Right ventricle myocardium inferior (tissue), 1 donor: ENCODE measurements at regions of chr10 and their contacts with region 1.

Region 1: DNA sequence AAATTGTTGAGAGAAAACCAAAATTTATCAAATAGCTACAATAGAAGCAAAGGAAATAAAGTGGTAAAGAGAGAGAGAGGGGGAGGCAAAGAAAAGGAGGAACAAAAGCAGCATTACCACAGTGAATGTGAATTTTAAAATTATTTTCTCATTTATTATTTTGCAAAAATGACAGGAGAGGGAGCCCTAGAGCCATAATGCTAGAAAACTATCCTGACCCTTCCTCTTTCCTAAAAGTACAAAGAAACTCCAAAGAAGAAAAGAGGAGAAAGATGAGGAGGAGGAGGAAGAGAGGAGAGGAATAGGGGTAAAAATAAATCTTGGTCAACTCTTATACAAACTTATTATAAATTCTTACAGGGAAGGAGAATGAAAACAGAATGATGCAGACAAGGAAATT is 921.5 kb downstream of the NRG3 start:
- DNase-seq: no peak
- ATAC-seq: no peak

Region 2: GRCh38 chr10:82551506-82551905 is 245.0 kb before region 1 on chr10:
- intact Hi-C with region 1: no loop called
- DNase-seq: no peak
- ATAC-seq: no peak

Region 3: DNA sequence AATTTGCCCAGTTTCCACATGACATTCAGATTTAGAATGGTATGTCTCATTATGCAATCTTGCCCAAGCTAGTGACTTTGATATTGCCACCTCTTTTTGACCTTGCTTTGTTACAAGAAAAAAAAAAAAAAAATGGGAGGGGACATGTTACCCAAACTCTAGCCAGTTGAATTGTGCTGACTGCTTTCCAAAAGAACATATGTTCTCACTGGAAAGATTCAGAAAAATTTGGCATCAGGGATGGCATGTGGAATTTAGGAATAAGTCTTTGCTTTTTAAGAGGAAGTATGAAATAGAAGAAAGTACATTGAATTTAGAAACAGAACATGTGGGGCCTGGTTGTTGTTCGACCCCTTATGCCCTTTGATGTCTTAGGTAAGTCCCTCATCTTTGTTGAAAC is 74.7 kb before region 1 on chr10:
- intact Hi-C with region 1: no loop called
- DNase-seq: no peak
- ATAC-seq: no peak

Region 4: GRCh38 chr10:82737549-82737948 is 59.0 kb before region 1 on chr10:
- intact Hi-C with region 1: no loop called
- DNase-seq: peak; percentile 61
- ATAC-seq: no peak

Region 5: GRCh38 chr10:83052508-83052907 is 256.0 kb after region 1 on chr10:
- intact Hi-C with region 1: no loop called
- DNase-seq: no peak
- ATAC-seq: no peak

Region 6: GRCh38 chr10:83871187-83872081 is 1074.9 kb after region 1 on chr10:
- intact Hi-C with region 1: loop called (anchors 10 kb)
- DNase-seq: peak; percentile 72
- ATAC-seq: peak; percentile 83